Ovary (tissue), 10 donors: ENCODE measurements at regions of chr12 and their contacts with region 1.

Region 1: DNA sequence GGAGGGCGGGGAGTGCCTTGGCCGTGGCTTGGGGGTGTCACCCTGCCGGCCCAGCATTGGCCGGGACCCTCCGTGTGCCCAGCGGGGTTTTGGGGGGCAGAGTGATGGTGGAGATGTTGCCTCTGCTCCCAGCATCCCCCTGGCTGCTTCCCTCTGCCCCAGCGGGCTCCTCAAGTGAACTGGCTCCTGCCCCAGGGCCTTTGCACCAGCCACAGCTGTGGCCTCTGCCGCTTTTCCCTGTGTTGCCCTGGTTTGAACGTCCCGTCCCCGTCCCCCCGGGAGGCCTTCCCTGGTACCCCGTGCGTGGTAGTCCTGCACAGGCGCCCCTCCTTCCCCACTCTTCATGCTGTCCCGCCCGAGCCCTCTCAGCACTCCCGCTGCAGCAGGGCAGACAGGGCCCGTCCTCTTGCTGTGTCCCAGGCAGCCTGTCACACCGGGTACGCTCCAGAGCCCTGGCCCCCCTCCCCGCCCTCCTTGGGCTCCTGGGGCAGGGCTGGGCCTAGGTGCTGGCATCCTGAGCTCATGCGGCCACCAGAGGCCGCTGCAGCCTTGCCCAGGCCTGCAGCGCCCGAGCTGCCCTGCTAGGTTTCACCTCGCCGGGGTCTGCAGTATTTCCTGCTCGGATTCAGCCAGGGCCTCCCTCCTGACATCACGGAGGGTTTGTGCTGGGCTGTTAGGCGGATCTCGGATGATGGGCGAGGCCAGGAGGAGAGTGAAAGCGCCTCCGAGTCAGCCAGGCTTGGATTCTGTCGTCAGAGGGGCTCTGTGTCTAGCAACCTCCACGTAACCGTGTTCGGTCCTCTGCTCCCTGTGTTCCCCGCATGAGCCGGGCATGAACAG is 9.5 kb downstream of the NOC4L start:
- DNase-seq: peak; percentile 56 to 84 (median 73)
- H3K4me3 ChIP-seq: peak overlapping the region; percentile 11
- H3K27ac ChIP-seq: no peak overlapping the region
- H3K4me1 ChIP-seq: no peaks in the 10 kb centered on the region
- H3K27me3 ChIP-seq: no peaks in the 10 kb centered on the region
- CTCF ChIP-seq: peak; percentile 80 to 85 (median 81)
- EP300 ChIP-seq: no peak
- POLR2A ChIP-seq: no peak

Region 2: GRCh38 chr12:130286041-130286440 is 1867.7 kb before region 1 on chr12:
- intact Hi-C with region 1: no loop called
- DNase-seq: no peak
- H3K4me3 ChIP-seq: no peak overlapping the region
- H3K27ac ChIP-seq: no peak overlapping the region
- H3K4me1 ChIP-seq: no peaks in the 10 kb centered on the region
- H3K27me3 ChIP-seq: no peaks in the 10 kb centered on the region
- CTCF ChIP-seq: no peak
- EP300 ChIP-seq: no peak
- POLR2A ChIP-seq: no peak

Region 3: GRCh38 chr12:132046561-132046960 is 107.2 kb before region 1 on chr12:
- intact Hi-C with region 1: no loop called
- DNase-seq: no peak
- H3K4me3 ChIP-seq: no peak overlapping the region
- H3K27ac ChIP-seq: no peak overlapping the region
- H3K4me1 ChIP-seq: no peaks in the 10 kb centered on the region
- H3K27me3 ChIP-seq: no peaks in the 10 kb centered on the region
- CTCF ChIP-seq: no peak
- EP300 ChIP-seq: no peak
- POLR2A ChIP-seq: no peak

Region 4: DNA sequence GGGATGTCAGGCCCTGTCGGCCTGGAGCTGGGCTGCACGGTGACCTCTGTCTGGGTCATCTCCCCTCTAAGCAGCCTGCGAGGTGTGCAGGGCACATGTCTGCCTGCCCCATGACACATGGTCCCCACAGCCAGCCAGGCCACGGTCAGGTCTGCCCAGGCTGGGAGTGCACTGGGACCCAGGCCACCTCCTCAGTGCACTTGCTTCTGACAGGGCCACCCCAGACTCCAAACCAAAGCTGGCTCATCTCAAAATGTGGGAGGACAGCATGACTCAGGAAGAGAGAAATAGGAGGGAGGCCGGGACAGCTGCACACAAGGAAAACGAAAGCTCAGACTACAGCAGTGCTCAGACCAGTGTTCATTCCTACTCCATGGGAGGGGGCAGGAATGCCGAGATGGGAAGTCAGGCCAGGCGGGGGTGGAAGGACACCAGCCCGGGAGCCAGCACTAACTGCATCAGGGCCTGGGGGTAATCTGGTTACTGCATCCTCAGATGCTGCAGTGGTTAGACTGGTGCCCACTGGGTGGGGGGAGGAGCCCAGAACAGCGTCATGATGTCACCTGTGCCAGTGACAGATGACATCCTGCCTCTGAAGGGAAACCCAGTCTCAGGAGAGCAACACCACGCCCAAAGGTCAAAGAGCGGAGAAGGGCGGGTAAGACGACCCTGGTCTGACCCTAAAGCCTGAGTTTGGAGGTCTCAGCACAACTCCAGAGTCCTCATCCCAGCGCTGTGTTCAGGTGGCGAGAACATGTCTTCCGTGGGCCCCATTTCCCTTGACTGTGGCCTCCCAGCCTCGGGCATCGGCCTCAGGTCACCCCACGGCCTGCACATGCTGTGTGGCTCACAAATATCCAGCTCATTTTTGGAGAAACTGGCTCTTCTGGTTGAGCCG is 469.0 kb after region 1 on chr12:
- intact Hi-C with region 1: loop called in 1 of 4 experiments (anchors 10 kb)
- DNase-seq: peak; percentile 63 to 79 (median 75)
- H3K4me3 ChIP-seq: no peak overlapping the region
- H3K27ac ChIP-seq: peak overlapping the region; percentile 30 to 55
- H3K4me1 ChIP-seq: peaks cover 15% of the 10 kb centered on the region
- H3K27me3 ChIP-seq: peaks cover 4% of the 10 kb centered on the region
- CTCF ChIP-seq: no peak
- EP300 ChIP-seq: no peak
- POLR2A ChIP-seq: no peak